ENCODE measurements at regions of chr7 and their contacts with region 1.

Region 1: DNA sequence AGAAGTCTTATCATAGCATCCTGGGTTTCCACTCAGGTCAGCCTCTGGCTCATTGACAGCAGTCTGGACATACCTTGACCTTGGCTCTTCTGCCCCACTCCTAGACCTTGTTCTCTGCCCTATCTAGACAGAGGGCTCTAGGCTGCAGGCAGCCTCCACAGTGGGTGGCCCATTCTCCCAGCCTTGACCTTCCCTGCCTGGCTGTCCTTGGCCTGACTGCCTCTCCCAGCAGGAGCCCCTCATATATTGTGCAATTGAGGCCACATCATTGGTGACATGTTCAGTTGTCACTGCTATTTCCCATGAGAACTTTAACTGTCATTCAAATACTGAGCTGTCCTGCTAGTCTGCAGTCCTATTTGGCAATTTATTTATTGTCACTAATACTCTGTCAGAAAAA is 503.4 kb downstream of the PLXNA4 start:
- DNase-seq: no peak
- ATAC-seq: peak; percentile 17 to 32 (median 22)
- H3K4me3 ChIP-seq: no peak overlapping the region
- H3K27ac ChIP-seq: no peak overlapping the region
- H3K4me1 ChIP-seq: peaks cover 27% of the 10 kb centered on the region
- H3K27me3 ChIP-seq: no peaks in the 10 kb centered on the region
- CTCF ChIP-seq: no peak

Region 2: DNA sequence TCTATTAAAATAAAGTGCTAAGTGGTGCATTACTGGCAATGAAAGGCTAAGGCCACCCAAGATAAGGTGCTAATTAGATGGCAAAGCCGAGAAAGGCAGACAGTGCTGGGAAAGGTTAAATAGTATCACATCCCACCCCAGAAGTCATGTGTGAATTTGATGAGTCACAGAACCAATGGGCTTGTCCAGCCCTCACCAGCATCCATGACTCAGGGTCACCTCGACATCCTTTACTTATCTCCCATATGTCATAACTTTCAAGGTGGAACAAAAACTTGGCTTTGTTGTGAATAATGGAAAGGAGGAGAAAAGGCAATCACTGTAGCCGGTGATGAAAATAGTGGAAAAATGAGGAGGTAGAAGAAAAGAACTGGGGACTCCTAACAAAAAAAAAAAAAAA is 44.3 kb after region 1 on chr7:
- intact Hi-C with region 1: no loop called
- DNase-seq: no peak
- ATAC-seq: no peak
- H3K4me3 ChIP-seq: no peak overlapping the region
- H3K27ac ChIP-seq: no peak overlapping the region
- H3K4me1 ChIP-seq: no peaks in the 10 kb centered on the region
- H3K27me3 ChIP-seq: no peaks in the 10 kb centered on the region
- CTCF ChIP-seq: no peak

Region 3: DNA sequence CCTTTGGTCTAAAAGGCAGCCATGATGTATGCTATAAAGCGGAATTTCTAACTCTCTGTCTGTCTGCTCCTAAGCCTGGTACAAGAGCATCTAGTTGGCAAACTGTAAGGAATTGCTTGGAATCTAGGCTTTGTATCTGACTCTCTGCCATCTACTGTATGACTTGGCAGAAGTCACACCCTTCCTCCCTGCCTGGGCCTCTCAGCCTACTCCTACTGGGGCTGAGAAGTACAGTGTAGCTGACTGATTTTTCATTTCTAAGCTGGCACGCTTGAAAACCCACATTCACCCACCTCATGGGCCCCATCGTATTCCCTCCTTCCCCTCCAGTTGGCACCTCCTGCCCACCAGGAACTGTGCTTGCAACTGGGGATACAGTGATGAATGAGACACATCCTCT is 68.2 kb after region 1 on chr7:
- intact Hi-C with region 1: loop called in 1 of 2 experiments (anchors 5 kb)
- DNase-seq: no peak
- ATAC-seq: no peak
- H3K4me3 ChIP-seq: no peak overlapping the region
- H3K27ac ChIP-seq: no peak overlapping the region
- H3K4me1 ChIP-seq: no peaks in the 10 kb centered on the region
- H3K27me3 ChIP-seq: no peaks in the 10 kb centered on the region
- CTCF ChIP-seq: no peak